AG04449 (cell line): ENCODE measurements at regions of chr16 and their contacts with region 1.

Region 1: GRCh38 chr16:19086322-19087199 is 19.1 kb downstream of the COQ7 start:
- DNase-seq: peak; percentile 14
- H3K4me3 ChIP-seq: peak overlapping the region; percentile 63
- CTCF ChIP-seq: peak; percentile 98

Region 2: DNA sequence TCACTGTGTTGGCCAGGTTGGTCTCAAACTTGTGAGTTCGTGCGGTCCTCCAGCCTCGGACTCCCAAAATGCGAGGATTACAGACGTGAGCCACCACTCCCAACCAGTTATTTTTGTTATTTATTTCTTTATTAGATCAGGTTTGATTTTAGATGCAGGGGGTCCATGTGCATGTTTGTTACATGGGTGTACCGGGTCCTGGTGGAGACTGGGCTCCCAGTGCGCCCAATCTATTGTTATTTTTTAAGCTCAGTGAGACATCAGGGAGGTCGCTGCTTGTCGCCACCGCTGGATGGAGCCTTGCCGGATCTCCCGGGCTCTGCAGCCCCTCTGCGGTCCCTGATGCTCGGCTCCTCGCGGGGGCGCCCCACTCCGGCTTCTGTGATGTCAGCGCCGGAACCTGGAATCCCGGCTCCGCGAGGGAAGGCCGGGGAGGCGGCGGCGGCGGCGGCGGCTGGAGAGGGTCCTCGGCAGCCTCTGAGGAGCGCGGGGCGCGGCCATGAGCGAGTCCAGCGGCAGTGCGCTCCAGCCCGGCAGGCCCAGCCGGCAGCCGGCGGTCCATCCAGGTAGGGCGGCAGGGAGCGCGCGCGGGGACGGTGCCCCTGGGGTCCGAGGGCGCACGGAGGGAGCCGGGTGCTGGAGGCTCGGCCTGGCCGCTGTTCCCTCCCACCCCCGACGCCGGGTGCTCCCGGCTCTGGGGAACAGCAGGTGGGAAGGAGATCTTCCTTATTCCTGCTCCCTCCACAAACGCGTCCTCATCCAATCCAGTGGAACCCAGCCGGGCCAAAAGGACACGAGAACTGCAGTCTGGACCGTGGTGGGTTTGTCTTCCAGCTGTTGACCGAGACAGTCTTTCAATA is 102.8 kb before region 1 on chr16 and contains the start of gene TMC7:
- CTCF ChIA-PET with region 1: interaction called, 31 read pairs
- POLR2A ChIA-PET with region 1: no interaction called
- DNase-seq: no peak
- H3K4me3 ChIP-seq: peak within 1 kb of the TSS; percentile 60
- CTCF ChIP-seq: peak; percentile 92

Region 3: GRCh38 chr16:19075511-19075910 is 11.1 kb before region 1 on chr16:
- CTCF ChIA-PET with region 1: interaction called, 24 read pairs
- POLR2A ChIA-PET with region 1: no interaction called
- DNase-seq: no peak
- H3K4me3 ChIP-seq: no peak overlapping the region
- CTCF ChIP-seq: no peak

Region 4: DNA sequence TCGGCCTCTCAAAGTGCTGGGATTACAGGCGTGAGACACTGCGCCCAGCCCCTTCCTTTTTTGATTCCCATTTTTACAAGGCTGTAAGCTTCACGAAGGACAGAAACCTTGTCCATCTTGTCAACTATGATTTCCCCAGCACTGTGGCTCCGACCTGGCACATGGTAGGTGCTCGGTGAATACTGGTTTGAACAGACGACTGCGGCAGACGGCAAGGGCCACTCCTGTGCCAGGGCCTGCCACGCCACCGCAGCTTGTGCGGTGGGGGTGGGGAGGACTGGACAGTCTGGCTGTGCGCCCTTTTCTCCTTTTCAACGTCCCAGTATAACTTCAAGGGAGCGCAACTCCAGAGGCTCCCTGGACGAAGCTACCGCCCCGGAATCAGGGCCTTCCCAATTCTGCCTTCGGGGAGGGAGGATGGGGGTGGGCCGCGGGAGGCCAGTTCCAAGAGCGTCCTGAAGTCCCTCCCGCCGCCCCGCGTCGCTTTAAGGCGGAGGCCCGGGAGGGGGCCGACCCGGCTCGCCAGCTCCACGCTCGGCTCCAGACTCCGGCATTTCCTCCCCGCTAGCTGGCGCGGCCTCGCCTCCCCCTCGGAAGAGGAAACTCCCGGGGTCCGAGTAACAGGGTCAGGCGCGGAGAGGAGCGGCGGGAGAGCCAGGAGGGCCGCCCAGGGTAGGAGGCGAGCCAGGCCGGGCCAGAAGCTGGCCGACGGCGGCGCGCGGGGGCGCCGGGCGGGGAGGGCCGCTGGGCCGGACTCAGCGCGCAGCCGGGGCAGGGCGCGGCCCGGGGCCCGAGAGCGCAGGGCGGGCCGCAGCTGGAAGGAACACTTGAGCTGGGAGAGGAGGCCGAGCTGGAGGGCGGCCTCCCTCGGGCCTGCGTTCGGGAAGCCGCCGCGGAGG is 27.1 kb after region 1 on chr16 and contains the start of gene ITPRIPL2:
- CTCF ChIA-PET with region 1: interaction called, 24 read pairs
- POLR2A ChIA-PET with region 1: interaction called, 3 read pairs
- DNase-seq: no peak
- H3K4me3 ChIP-seq: peak within 1 kb of the TSS; percentile 75
- CTCF ChIP-seq: no peak

Region 5: GRCh38 chr16:19179546-19180490 is 93.3 kb after region 1 on chr16:
- CTCF ChIA-PET with region 1: interaction called, 161 read pairs
- POLR2A ChIA-PET with region 1: no interaction called
- DNase-seq: no peak
- H3K4me3 ChIP-seq: no peak overlapping the region
- CTCF ChIP-seq: peak; percentile 63

Region 6: GRCh38 chr16:19223235-19224170 is 136.9 kb after region 1 on chr16:
- CTCF ChIA-PET with region 1: no interaction called
- POLR2A ChIA-PET with region 1: no interaction called
- DNase-seq: no peak
- H3K4me3 ChIP-seq: no peak overlapping the region
- CTCF ChIP-seq: peak; percentile 29

Region 7: DNA sequence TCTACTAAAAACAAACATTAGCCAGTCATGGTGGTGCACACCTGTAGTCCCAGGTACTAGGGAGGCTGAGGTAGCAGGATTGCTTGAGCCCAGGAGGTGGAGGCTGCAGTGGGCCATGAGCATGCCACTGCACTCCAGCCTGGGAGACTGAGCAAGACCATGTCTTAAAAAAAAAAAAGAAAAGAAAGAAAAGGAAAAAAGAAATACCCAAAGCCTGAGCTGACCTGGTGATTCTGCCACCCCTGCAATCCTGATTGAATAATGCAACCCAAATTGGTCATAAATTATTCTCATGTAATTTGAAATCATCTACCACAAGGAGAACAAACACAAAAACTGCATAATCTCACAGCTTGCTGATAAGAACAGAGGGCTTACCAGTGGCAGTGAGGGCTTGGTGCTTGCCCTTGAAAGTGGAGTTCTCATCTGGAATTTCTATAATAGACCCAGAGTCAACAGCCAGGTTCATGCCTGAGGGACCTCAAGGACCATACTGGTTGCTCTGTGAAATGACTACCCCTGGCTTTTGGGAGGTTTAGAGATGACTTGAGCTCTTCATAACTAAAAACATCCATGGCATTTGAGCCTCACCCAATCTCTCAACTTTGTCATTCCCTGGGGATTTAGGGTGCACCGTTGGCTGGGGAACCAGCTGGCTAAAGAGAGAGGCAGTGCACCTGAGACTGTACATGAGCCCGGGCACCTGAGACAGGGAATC is 295.7 kb after region 1 on chr16:
- CTCF ChIA-PET with region 1: interaction called, 39 read pairs
- POLR2A ChIA-PET with region 1: no interaction called
- DNase-seq: no peak
- H3K4me3 ChIP-seq: no peak overlapping the region
- CTCF ChIP-seq: no peak